ENCODE measurements at regions of chr1 and their contacts with region 1.

Region 1: DNA sequence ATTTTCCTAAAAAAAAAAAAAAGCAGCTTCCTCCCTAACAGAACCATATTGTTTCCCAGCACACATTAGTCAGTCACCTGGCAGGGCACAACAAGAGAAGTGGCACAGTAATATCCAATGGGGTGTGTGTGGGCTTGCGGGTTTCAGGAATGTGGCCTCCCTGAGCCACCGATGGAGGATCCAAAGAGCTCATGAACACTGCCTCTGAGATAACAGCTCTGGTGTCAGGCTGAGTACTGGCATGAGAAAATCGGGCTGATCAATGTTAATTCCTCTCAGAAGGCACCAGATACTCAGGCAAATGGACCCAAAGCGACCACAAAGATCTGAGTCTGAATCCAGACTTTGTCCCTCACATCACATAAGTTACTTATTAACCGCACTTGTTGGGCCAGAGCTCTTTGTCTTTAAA is 2.2 kb upstream of the LYPD8 start:
- DNase-seq: peak; percentile 89
- ATAC-seq: peak; percentile 93
- H3K4me3 ChIP-seq: peak overlapping the region in 2 of 3 experiments; percentile 33 to 48; a peak in 1 of 6 replicates
- H3K27ac ChIP-seq: peak overlapping the region; percentile 77
- H3K4me1 ChIP-seq: peaks cover 45% of the 10 kb centered on the region
- H3K27me3 ChIP-seq: no peaks in the 10 kb centered on the region
- CTCF ChIP-seq: no peak
- EP300 ChIP-seq: no peak
- POLR2A ChIP-seq: peak; percentile 22 to 29; a peak in 1 of 4 replicates
- RAD21 ChIP-seq: no peak

Region 2: DNA sequence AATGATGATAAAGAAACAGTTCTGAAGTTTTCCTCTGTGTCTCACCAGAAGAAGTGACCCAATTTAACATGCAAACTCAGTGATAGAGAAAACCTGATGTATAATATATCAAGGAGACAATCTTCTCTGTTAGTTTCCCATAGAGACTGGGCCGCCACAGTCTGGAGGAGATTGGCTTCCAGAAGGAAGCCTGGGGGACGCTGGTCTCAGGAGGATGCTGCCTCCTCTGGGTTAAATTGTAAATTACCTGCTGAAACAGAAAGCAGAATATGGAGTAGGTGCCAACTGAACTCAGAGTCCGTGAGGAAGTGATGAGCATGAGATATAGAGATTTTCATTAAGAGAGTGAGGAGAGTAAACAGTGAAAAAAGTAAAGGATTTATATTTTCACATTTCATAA is 71.0 kb before region 1 on chr1:
- CTCF ChIA-PET with region 1: no interaction called
- POLR2A ChIA-PET with region 1: no interaction called
- in situ Hi-C with region 1: no loop called
- intact Hi-C with region 1: no loop called
- DNase-seq: no peak
- ATAC-seq: peak; percentile 90
- H3K4me3 ChIP-seq: no peak overlapping the region
- H3K27ac ChIP-seq: no peak overlapping the region
- H3K4me1 ChIP-seq: no peaks in the 10 kb centered on the region
- H3K27me3 ChIP-seq: no peaks in the 10 kb centered on the region
- CTCF ChIP-seq: peak; percentile 40
- EP300 ChIP-seq: no peak
- POLR2A ChIP-seq: no peak
- RAD21 ChIP-seq: 0 out of 2 replicates have a peak, but pooled peaks have one; percentile 20

Region 3: GRCh38 chr1:248730507-248731335 is 27.1 kb before region 1 on chr1:
- CTCF ChIA-PET with region 1: no interaction called
- POLR2A ChIA-PET with region 1: no interaction called
- in situ Hi-C with region 1: no loop called
- intact Hi-C with region 1: no loop called
- DNase-seq: no peak
- ATAC-seq: no peak
- H3K4me3 ChIP-seq: no peak overlapping the region
- H3K27ac ChIP-seq: no peak overlapping the region
- H3K4me1 ChIP-seq: 0 out of 2 replicates have a peak, but pooled peaks cover 7% of the 10 kb centered on the region
- H3K27me3 ChIP-seq: no peaks in the 10 kb centered on the region
- CTCF ChIP-seq: no peak
- EP300 ChIP-seq: no peak
- POLR2A ChIP-seq: no peak
- RAD21 ChIP-seq: no peak

Region 4: GRCh38 chr1:248818505-248819374 is 61.0 kb after region 1 on chr1:
- CTCF ChIA-PET with region 1: no interaction called
- POLR2A ChIA-PET with region 1: no interaction called
- in situ Hi-C with region 1: loop called (anchors 5 kb)
- intact Hi-C with region 1: no loop called
- DNase-seq: no peak
- ATAC-seq: no peak
- H3K4me3 ChIP-seq: no peak overlapping the region
- H3K27ac ChIP-seq: no peak overlapping the region
- H3K4me1 ChIP-seq: peaks cover 38% of the 10 kb centered on the region
- H3K27me3 ChIP-seq: no peaks in the 10 kb centered on the region
- CTCF ChIP-seq: no peak
- EP300 ChIP-seq: no peak
- POLR2A ChIP-seq: no peak
- RAD21 ChIP-seq: no peak

Region 5: GRCh38 chr1:248828845-248829244 is 71.1 kb after region 1 on chr1:
- CTCF ChIA-PET with region 1: no interaction called
- POLR2A ChIA-PET with region 1: no interaction called
- in situ Hi-C with region 1: no loop called
- intact Hi-C with region 1: no loop called
- DNase-seq: peak; percentile 95
- ATAC-seq: peak; percentile 10
- H3K4me3 ChIP-seq: peak overlapping the region in 1 of 3 experiments; percentile 3; a peak in 1 of 6 replicates
- H3K27ac ChIP-seq: peak overlapping the region; percentile 22
- H3K4me1 ChIP-seq: peaks cover 42% of the 10 kb centered on the region
- H3K27me3 ChIP-seq: no peaks in the 10 kb centered on the region; a peak in 1 of 5 replicates
- CTCF ChIP-seq: no peak
- EP300 ChIP-seq: peak in 1 of 2 experiments; percentile 70; a peak in 2 of 4 replicates
- POLR2A ChIP-seq: no peak
- RAD21 ChIP-seq: no peak

Measured in HepG2 (cell line).